ENCODE measurements at regions of chr16 and their contacts with region 1.

Region 1: DNA sequence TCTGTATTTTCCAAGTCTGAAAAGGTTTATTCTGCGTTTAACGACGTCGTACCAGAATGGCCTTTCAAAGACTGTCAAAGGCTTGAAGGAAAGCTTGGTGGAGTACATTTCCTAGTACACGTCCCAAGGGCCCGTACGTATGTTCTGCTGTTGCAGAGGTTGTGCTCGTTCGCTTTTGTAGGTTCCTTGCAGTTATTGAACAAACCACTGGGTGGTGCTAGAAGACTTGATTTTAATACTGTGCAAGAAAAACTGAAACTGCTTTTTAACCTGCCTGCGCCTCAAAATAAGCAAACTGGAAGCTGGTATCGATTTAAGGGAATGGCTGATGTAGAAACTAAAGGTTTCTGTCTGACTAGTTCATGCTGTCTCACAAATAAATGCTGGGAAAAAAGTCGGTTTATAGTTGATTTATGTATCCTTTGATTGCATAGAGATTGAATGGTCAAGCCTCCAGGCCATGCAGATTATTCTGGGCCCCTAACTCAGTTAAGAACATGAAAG is 54.6 kb downstream of the USP10 start:
- DNase-seq: peak; percentile 80
- H3K4me3 ChIP-seq: no peak overlapping the region
- H3K27ac ChIP-seq: no peak overlapping the region
- H3K27me3 ChIP-seq: no peaks in the 10 kb centered on the region
- CTCF ChIP-seq: peak; percentile 77

Region 2: GRCh38 chr16:84040823-84041820 is 713.3 kb before region 1 on chr16:
- CTCF ChIA-PET with region 1: no interaction called
- POLR2A ChIA-PET with region 1: no interaction called
- DNase-seq: no peak
- H3K4me3 ChIP-seq: no peak overlapping the region
- H3K27ac ChIP-seq: no peak overlapping the region
- H3K27me3 ChIP-seq: peaks cover 67% of the 10 kb centered on the region
- CTCF ChIP-seq: no peak

Region 3: DNA sequence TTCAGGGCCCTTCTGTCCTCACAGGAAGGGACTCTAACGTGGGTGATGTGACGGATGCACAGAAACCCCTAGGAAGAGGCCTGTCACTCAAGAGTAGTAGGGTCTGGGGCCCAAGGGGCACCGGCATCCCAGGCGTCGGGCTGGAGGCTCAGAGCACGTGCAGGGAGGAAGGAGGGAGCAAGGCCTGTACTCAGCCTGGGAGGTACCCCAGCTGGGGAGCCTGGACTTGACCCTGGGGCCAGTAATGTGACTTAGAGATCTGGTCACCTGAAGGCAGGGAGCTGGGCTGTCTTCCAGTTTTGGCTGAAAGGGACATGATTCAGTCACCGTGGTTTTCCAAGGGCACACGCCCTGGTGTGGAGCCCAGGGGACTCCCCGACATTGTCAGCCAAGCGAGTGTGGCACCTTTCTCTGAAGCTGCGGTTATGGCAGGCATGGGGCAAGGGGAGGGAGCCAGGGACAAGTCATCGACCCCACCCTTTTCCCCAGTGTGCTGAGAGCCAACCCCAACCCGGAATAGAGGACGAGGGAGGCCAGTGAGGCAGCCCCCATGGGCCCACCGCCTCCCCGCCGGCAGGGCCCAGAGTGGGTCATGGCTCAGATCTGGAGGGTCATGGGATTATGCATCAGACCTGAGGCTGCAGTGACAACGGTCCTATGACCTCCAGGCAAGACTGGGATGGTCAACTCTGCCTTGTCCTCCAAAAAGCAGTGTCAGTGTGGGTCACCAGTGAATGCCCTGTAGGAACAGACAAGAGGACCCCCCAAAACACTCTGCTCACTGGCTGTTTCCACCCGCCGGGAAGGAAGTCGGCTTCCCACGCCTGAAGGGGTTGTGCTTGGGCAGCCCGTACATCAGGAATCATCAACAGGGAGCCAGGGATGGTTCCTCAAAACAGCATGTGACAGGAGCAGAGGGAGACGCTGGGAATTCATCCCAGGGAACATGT is 291.9 kb before region 1 on chr16:
- CTCF ChIA-PET with region 1: no interaction called
- POLR2A ChIA-PET with region 1: no interaction called
- DNase-seq: no peak
- H3K4me3 ChIP-seq: no peak overlapping the region
- H3K27ac ChIP-seq: no peak overlapping the region
- H3K27me3 ChIP-seq: no peaks in the 10 kb centered on the region
- CTCF ChIP-seq: no peak

Region 4: GRCh38 chr16:84726079-84726668 is 28.2 kb before region 1 on chr16:
- CTCF ChIA-PET with region 1: interaction called, 13 read pairs
- POLR2A ChIA-PET with region 1: no interaction called
- DNase-seq: peak; percentile 66
- H3K4me3 ChIP-seq: peak overlapping the region; percentile 0; the same call in 1 of the 2 replicates
- H3K27ac ChIP-seq: peak overlapping the region; percentile 62
- H3K27me3 ChIP-seq: no peaks in the 10 kb centered on the region
- CTCF ChIP-seq: peak; percentile 93

Region 5: DNA sequence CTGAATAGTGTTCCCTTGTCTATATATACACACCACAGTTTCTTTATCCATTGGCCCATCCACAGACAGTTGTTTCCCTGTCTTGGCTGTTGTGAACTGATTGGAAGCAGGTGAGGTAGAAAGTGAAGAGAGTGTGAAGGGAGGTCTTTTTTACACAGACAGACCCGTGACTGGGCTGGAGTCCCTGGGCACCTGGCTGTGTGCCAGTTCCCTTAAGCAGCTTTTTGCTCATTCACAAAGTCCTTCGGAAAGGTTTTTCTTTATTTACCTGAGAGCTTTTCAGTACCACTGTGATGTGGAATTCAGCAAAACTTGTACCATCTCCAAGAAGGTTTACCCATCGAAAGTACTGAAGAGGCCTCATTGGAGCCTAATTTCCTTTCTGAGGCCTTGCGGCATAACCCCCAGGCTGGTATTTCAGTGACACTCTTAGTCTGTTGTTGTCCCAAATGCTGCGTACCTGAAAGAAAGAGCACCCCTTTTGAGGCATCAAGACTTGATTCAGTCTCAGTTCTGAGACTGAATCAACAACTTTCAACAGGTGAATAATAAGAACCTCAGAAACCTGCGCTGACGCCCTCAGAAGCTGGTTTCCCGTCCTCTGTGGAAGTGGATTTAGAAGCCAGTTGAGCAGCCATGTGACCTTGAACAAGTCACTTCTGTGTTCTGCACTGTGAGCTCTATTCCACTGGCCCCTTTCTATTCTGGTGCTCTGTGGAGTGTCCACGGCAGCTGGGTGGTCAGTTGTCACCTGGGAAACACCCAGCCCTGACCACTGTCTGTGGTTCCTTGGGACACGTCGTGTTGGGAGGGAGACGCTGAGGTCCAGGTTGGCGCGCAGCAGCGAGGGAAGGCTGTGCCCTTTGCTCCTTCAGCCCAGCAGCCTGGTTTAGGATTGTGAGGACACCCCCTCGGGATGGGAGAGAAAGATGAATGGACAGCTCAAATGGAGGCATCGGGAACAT is 11.5 kb after region 1 on chr16:
- CTCF ChIA-PET with region 1: interaction called, 13 read pairs
- POLR2A ChIA-PET with region 1: interaction called, 5 read pairs
- DNase-seq: no peak
- H3K4me3 ChIP-seq: no peak overlapping the region
- H3K27ac ChIP-seq: peak overlapping the region; percentile 87
- H3K27me3 ChIP-seq: no peaks in the 10 kb centered on the region
- CTCF ChIP-seq: no peak

Region 6: GRCh38 chr16:84874004-84874435 is 119.6 kb after region 1 on chr16:
- CTCF ChIA-PET with region 1: interaction called, 13 read pairs
- POLR2A ChIA-PET with region 1: no interaction called
- DNase-seq: no peak
- H3K4me3 ChIP-seq: no peak overlapping the region
- H3K27ac ChIP-seq: no peak overlapping the region
- H3K27me3 ChIP-seq: no peaks in the 10 kb centered on the region
- CTCF ChIP-seq: no peak

Region 7: DNA sequence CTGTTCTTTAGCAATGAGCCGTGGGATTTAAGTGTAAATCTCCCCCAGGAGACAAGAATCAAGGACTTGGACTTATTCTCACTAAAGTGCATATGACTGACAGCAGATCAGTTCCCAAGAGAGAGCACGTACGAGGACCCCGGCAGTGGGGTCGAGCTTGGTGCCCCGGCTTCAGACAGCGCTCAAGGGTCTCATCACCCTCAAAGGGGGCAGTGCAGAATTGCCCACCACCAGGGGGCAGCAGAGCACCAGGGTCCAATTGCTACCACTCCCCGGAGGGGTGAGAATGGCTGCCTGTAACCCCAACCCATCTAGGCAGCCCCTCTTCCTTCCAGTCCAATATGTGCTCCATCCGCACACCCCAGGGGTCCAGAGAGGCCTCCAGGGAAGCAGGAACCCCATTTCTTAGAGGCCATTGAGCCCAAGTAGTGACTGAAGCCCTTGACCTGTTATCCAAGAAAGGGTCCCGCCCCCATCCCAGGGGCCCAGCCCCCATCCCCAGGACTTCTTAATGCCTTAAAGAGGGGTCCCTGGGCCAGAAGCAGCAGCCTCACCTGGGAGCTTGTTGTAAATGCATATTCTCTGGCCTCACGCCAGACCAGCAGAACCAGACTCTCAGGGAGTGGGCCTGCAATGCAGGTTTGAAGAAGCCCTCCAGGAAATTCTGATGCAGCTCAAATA is 170.8 kb after region 1 on chr16:
- CTCF ChIA-PET with region 1: interaction called, 12 read pairs
- POLR2A ChIA-PET with region 1: no interaction called
- DNase-seq: no peak
- H3K4me3 ChIP-seq: no peak overlapping the region
- H3K27ac ChIP-seq: no peak overlapping the region
- H3K27me3 ChIP-seq: no peaks in the 10 kb centered on the region
- CTCF ChIP-seq: peak; percentile 73

Region 8: DNA sequence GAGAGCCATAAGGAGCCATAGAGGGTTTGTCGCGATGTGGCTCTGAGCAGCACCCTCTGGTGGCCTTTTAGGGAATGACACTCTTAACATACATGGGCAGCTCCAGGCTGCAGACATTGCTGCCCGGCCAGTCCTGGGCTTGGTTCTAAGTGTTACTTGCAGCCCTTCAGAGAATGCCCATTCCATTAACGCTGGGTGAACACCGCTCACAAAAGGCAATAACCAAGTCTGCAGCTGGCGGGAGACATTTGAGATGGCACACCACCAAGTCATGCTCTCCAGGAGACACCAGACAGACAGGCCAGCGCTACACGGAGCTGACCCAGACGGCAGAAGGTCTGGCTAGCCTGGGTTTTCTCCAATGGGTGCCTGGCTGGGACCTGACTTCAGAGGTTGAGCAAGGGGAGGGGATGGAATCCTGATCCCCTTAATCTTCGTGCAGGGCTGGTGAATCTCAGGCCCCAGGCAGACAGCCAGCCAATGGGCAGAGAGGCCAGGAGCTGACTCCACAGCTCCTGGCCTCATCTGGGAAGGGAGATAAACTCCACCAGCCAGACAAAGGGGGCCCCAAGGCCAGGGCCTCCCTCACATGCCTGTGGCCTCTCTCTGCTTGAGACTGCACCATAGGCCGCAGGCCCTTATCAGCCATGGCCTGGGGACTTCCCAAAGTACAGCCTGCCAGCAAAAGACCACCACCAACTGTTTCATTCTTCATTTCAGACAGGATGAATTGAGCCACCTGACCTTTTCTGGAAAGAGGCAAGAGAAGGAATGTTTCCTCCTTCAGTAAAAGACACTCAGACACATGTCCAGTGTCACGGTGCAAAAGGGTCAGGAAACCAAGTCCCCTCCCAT is 198.2 kb after region 1 on chr16:
- CTCF ChIA-PET with region 1: interaction called, 171 read pairs
- POLR2A ChIA-PET with region 1: interaction called, 3 read pairs
- DNase-seq: peak; percentile 66
- H3K4me3 ChIP-seq: no peak overlapping the region
- H3K27ac ChIP-seq: no peak overlapping the region
- H3K27me3 ChIP-seq: no peaks in the 10 kb centered on the region
- CTCF ChIP-seq: peak; percentile 90

Region 9: DNA sequence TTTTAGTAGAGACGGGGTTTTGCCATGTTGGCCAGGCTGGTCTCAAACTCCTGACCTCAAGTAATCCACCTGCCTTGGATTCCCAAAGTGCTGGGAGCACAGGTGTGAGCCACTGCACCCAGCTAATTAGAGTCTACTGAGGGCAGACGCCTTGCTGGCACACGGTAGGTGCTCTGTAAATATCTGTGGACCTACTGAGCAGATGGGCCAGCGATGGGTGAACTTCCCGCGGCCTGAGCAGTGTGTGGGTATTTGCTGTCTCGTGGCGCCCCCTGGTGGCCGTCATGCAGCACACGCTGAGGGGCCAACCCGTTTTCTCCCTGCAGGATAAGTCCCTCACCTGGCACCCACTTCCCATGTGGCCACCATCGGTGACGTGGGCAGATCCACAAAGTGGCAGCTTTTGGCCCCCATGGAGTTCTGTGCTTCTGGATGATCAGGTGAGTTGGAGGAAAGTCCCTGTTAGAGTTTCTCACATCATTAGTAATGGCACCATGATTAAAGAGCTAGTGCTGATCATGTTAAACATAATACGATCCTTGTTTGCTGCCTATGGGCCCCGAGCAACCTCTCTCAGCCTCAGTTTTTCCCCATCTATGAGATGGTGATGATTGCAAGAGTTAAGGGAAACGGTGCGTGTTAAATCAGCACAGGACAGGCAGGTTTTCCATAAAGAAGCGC is 216.2 kb after region 1 on chr16:
- CTCF ChIA-PET with region 1: interaction called, 186 read pairs
- POLR2A ChIA-PET with region 1: interaction called, 4 read pairs
- DNase-seq: peak; percentile 64
- H3K4me3 ChIP-seq: no peak overlapping the region
- H3K27ac ChIP-seq: no peak overlapping the region
- H3K27me3 ChIP-seq: no peaks in the 10 kb centered on the region
- CTCF ChIP-seq: peak; percentile 85

Measured in AG04450 (cell line).